Motor neuron (in vitro differentiated cells): ENCODE measurements at regions of chr15 and their contacts with region 1.

Region 1: DNA sequence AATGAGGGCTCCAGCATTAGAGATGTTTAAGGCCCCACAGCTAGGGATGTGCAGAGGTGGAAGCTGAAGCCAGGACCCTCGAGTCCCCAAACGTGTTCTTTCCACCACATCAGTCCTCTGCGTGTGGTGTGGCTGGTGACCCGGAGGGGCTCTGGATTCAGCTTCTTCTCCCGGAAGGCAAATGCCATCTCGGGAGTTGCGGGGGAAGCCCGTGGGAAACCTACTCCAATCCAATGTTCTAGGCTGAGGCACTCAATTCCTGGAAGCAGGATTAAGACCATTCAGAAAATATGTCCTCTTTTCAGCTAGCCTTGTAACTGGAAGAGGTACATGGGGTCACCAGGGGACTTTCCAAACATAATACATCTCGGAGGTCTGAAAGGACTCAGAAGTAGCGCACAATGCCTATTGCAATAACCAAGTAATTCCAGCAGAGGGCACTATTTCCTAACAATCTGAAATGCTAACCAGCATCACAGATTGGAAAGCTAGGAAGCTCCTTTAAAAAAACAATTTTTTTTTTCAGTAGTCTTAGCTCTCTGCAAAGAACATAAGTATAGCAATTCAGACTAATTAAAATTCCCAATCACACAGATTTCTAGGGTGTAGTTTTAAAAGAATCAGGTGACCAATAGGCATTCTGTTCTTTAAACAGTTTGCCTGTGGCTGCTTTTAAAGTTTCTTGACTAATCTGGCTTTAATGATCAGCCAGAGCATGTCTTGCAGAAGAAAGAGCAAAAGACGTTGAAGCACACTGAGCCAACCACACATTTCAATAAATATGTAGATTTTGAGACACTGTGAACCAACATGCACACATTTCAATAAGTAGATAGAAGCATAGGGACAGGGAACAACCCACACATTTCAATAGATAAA is 36.1 kb downstream of the BNC1 start:
- ATAC-seq: peak; percentile 49 to 90 (median 63)
- H3K4me3 ChIP-seq: no peak overlapping the region
- H3K27ac ChIP-seq: no peak overlapping the region
- H3K4me1 ChIP-seq: peaks cover 3 to 6% of the 10 kb centered on the region in 2 donors

Region 2: GRCh38 chr15:83158401-83158800 is 90.0 kb before region 1 on chr15:
- in situ Hi-C with region 1: no loop called
- ATAC-seq: no peak
- H3K4me3 ChIP-seq: no peak overlapping the region
- H3K27ac ChIP-seq: no peak overlapping the region
- H3K4me1 ChIP-seq: no peaks in the 10 kb centered on the region

Region 3: GRCh38 chr15:83413054-83413719 is 164.8 kb after region 1 on chr15:
- in situ Hi-C with region 1: loop called in 2 of 9 experiments (anchors 25 kb)
- ATAC-seq: no peak
- H3K4me3 ChIP-seq: no peak overlapping the region
- H3K27ac ChIP-seq: no peak overlapping the region
- H3K4me1 ChIP-seq: no peaks in the 10 kb centered on the region

Region 4: GRCh38 chr15:83436458-83437158 is 188.2 kb after region 1 on chr15:
- in situ Hi-C with region 1: loop called in 2 of 9 experiments (anchors 10 to 25 kb)
- ATAC-seq: peak; percentile 74 to 95 (median 79)
- H3K4me3 ChIP-seq: no peak overlapping the region
- H3K27ac ChIP-seq: no peak overlapping the region
- H3K4me1 ChIP-seq: no peaks in the 10 kb centered on the region

Region 5: GRCh38 chr15:83446904-83447709 is 198.7 kb after region 1 on chr15 and contains the start of gene SH3GL3:
- in situ Hi-C with region 1: loop called in 1 of 9 experiments (anchors 25 kb)
- ATAC-seq: peak; percentile 88 to 96 (median 91)
- H3K4me3 ChIP-seq: peak within 1 kb of the TSS; percentile 41 to 57 (median 50)
- H3K27ac ChIP-seq: peak within 1 kb of the TSS; percentile 35 to 73
- H3K4me1 ChIP-seq: no peaks in the 10 kb centered on the region
- total RNA-seq, gene SH3GL3: 3.7 to 22.6 (median 10.5) TPM